ENCODE measurements at regions of chr6 and their contacts with region 1.

Region 1: DNA sequence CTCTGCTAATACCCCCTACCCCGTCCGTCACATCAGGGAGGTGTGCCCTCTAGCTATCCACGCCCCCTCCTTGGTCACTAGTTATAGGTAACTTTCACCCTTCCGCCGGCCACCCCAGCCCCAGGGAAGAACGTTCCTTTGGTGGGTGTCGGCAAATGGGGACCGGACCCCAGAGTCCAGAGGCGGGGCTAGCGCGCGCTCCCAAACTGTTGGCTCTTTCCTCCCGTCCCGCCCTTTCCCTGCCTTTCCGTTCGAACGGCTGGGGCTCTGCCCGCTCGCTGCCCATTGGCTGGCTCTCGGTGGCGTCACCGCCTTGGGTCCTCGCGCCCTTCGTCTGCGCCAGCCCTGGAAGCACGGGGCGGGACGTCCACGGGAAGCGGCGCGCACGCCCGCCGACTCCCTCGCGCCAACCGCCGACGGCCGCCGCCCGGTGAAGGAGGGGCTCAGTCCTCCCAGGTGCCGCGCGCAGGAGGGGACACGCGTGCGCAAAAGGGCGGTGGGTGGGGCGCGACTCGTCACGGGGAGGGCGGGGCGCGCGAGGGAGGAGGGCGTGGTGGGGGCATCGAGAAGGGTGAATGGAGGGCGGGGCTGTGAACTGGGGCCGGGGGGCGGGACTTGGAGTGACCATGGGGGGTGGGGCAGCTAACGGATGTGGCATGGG is 634 bp upstream of the PHF1 start:
- DNase-seq: peak; percentile 94 to 98 (median 95)
- ATAC-seq: peak; percentile 82
- H3K4me3 ChIP-seq: peak overlapping the region; percentile 78
- H3K4me3 Mint-ChIP-seq: peak overlapping the region; percentile 85 to 95 (median 90)
- H3K27ac ChIP-seq: peak overlapping the region; percentile 100
- H3K27ac Mint-ChIP-seq: peak overlapping the region; percentile 65 to 99 (median 97)
- H3K4me1 ChIP-seq: peaks cover 35 to 36% of the 10 kb centered on the region in 2 donors
- H3K4me1 Mint-ChIP-seq: peaks cover 25 to 60% (median 46%) of the 10 kb centered on the region in 7 donors
- H3K27me3 ChIP-seq: no peaks in the 10 kb centered on the region
- H3K27me3 Mint-ChIP-seq: no peaks in the 10 kb centered on the region

Region 2: GRCh38 chr6:32843979-32844838 is 566.0 kb before region 1 on chr6 and contains the start of gene PSMB8:
- CTCF ChIA-PET with region 1: no interaction called
- POLR2A ChIA-PET with region 1: no interaction called
- intact Hi-C with region 1: loop called in 1 of 2 experiments (anchors 2 kb)
- DNase-seq: peak; percentile 92 to 99 (median 97)
- ATAC-seq: peak; percentile 90
- H3K4me3 ChIP-seq: peak within 1 kb of the TSS; percentile 97
- H3K4me3 Mint-ChIP-seq: peak within 1 kb of the TSS; percentile 92 to 99 (median 98)
- H3K27ac ChIP-seq: peak within 1 kb of the TSS; percentile 97
- H3K27ac Mint-ChIP-seq: peak within 1 kb of the TSS; percentile 99 to 100 (median 100)
- H3K4me1 ChIP-seq: peaks cover 71 to 72% of the 10 kb centered on the region in 2 donors
- H3K4me1 Mint-ChIP-seq: peaks cover 66 to 83% (median 79%) of the 10 kb centered on the region in 7 donors
- H3K27me3 ChIP-seq: no peaks in the 10 kb centered on the region
- H3K27me3 Mint-ChIP-seq: no peaks in the 10 kb centered on the region
- total RNA-seq, gene PSMB8: 111 to 419 (median 115) TPM

Region 3: DNA sequence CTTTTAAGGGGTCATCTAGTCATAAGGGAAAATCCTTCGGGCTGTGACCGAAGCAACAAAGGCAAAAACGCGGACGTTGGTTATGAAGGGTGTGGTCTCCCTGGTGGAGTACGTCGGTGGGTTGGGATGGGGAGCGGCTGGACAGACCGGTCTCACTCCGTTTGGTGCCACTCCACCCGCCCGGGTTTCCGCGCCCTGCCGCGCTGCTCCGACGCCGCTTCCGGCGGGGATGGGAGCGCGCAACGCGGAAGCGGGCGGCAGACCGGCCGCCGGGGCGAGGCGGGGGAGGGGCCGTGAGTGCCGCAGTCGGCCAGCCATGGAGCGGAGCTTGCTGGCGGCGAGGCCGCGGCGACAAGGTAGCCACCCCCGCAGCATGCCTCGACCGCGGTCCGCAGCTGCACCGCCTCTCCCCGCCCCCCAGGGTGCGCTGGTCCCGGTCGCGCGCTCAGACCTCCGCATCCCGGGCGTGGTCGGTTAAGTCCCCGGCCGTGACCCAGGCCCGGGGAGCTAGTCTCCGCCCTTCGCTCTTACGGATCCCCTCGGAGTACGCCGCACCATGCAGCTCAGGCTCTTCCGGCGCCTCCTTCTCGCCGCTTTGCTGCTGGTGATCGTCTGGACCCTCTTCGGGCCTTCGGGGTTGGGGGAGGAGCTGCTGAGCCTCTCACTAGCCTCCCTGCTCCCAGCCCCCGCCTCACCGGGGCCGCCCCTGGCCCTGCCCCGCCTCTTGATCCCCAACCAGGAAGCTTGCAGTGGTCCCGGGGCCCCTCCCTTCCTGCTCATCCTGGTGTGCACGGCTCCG is 133.1 kb before region 1 on chr6 and contains the start of gene B3GALT4:
- CTCF ChIA-PET with region 1: no interaction called
- POLR2A ChIA-PET with region 1: interaction called, 8 read pairs
- intact Hi-C with region 1: loop called in 1 of 2 experiments (anchors 1 kb)
- DNase-seq: peak; percentile 55 to 88 (median 63)
- ATAC-seq: peak; percentile 81
- H3K4me3 ChIP-seq: peak within 1 kb of the TSS; percentile 67
- H3K4me3 Mint-ChIP-seq: peak within 1 kb of the TSS; percentile 84 to 99 (median 92)
- H3K27ac ChIP-seq: peak within 1 kb of the TSS; percentile 87
- H3K27ac Mint-ChIP-seq: peak within 1 kb of the TSS; percentile 88 to 98 (median 93)
- H3K4me1 ChIP-seq: peaks cover 47 to 50% of the 10 kb centered on the region in 2 donors
- H3K4me1 Mint-ChIP-seq: peaks cover 38 to 83% (median 65%) of the 10 kb centered on the region in 7 donors
- H3K27me3 ChIP-seq: no peaks in the 10 kb centered on the region
- H3K27me3 Mint-ChIP-seq: no peaks in the 10 kb centered on the region
- total RNA-seq, gene B3GALT4: 12.9 to 48.0 (median 18.2) TPM

Region 4: GRCh38 chr6:33317669-33318425 is 92.3 kb before region 1 on chr6 and contains the start of gene ZBTB22:
- CTCF ChIA-PET with region 1: no interaction called
- POLR2A ChIA-PET with region 1: interaction called, 5 read pairs
- intact Hi-C with region 1: loop called (anchors 1 kb)
- DNase-seq: peak; percentile 87 to 97 (median 96)
- ATAC-seq: peak; percentile 73
- H3K4me3 ChIP-seq: peak within 1 kb of the TSS; percentile 97
- H3K4me3 Mint-ChIP-seq: peak within 1 kb of the TSS; percentile 81 to 100 (median 100)
- H3K27ac ChIP-seq: peak within 1 kb of the TSS; percentile 99
- H3K27ac Mint-ChIP-seq: peak within 1 kb of the TSS; percentile 97 to 99 (median 98)
- H3K4me1 ChIP-seq: peaks cover 59 to 62% of the 10 kb centered on the region in 2 donors
- H3K4me1 Mint-ChIP-seq: peaks cover 53 to 85% (median 75%) of the 10 kb centered on the region in 7 donors
- H3K27me3 ChIP-seq: no peaks in the 10 kb centered on the region
- H3K27me3 Mint-ChIP-seq: peaks cover 0 to 2% (median 0%) of the 10 kb centered on the region in 5 donors
- total RNA-seq, gene ZBTB22: 15.5 to 30.1 (median 20.5) TPM

Region 5: DNA sequence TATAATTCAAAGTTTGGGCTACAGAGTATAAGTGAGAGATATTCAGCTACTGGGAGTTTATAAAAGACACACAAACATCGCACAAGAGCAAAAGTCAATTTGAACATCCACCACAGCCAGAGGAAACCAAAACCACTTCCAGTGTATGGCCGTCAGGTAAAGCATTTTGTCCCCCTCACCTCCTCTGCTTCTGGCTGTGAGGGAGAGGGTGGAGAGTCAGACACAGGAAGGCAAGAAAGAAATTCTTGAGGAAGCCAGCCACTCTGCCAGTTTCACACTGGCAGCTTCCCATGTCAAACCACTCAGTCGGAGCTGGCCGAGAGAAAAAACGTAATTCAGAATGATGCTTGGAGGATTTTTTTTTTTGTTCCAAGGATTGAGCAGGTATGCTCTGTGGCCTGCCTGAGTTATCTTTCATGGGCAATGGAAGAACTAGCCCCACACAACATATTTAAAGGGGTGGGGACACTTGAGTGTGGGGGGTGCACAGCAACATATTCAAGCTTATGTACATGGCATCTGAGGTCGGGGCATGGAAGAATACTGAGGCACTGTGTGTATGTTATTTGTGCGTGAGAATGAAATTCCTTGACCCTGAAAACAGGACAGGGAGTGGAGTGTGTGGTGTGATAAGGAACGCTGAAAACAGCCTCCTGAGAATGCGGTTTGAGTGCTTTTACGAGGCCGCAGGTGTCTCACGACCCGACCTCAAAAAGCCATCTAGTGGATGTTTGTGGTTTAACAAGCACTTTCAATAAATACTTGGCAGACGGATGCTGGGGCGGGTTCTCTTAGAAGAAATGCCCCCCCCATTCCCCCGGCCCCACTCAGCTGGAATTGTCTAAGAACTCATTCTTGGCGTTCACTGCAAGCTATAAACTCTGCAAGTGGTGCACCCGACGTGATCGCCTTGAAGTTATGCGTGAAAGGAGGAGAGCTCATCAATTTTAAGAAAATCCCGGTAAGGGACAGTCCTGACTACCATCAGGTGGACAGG is 65.2 kb before region 1 on chr6:
- CTCF ChIA-PET with region 1: no interaction called
- POLR2A ChIA-PET with region 1: no interaction called
- intact Hi-C with region 1: loop called in 1 of 2 experiments (anchors 1 kb)
- DNase-seq: peak; percentile 28 to 87 (median 82)
- ATAC-seq: peak; percentile 60
- H3K4me3 ChIP-seq: peak overlapping the region; percentile 64
- H3K4me3 Mint-ChIP-seq: peak overlapping the region; percentile 68 to 89 (median 86)
- H3K27ac ChIP-seq: peak overlapping the region; percentile 60
- H3K27ac Mint-ChIP-seq: peak overlapping the region; percentile 88 to 99 (median 96)
- H3K4me1 ChIP-seq: peaks cover 23 to 33% of the 10 kb centered on the region in 2 donors
- H3K4me1 Mint-ChIP-seq: peaks cover 22 to 54% (median 41%) of the 10 kb centered on the region in 7 donors
- H3K27me3 ChIP-seq: no peaks in the 10 kb centered on the region
- H3K27me3 Mint-ChIP-seq: peaks cover 0 to 7% (median 0%) of the 10 kb centered on the region in 5 donors

Region 6: GRCh38 chr6:33430991-33431879 is 21.1 kb after region 1 on chr6:
- CTCF ChIA-PET with region 1: no interaction called
- POLR2A ChIA-PET with region 1: interaction called, 39 read pairs
- intact Hi-C with region 1: loop called in 1 of 2 experiments (anchors 1 kb)
- DNase-seq: peak; percentile 65 to 89 (median 87)
- ATAC-seq: peak; percentile 82
- H3K4me3 ChIP-seq: peak overlapping the region; percentile 52
- H3K4me3 Mint-ChIP-seq: peak overlapping the region; percentile 86 to 98 (median 92)
- H3K27ac ChIP-seq: peak overlapping the region; percentile 88
- H3K27ac Mint-ChIP-seq: peak overlapping the region; percentile 81 to 98 (median 96)
- H3K4me1 ChIP-seq: peaks cover 42 to 51% of the 10 kb centered on the region in 2 donors
- H3K4me1 Mint-ChIP-seq: peaks cover 56 to 69% (median 64%) of the 10 kb centered on the region in 7 donors
- H3K27me3 ChIP-seq: no peaks in the 10 kb centered on the region
- H3K27me3 Mint-ChIP-seq: no peaks in the 10 kb centered on the region

Region 7: DNA sequence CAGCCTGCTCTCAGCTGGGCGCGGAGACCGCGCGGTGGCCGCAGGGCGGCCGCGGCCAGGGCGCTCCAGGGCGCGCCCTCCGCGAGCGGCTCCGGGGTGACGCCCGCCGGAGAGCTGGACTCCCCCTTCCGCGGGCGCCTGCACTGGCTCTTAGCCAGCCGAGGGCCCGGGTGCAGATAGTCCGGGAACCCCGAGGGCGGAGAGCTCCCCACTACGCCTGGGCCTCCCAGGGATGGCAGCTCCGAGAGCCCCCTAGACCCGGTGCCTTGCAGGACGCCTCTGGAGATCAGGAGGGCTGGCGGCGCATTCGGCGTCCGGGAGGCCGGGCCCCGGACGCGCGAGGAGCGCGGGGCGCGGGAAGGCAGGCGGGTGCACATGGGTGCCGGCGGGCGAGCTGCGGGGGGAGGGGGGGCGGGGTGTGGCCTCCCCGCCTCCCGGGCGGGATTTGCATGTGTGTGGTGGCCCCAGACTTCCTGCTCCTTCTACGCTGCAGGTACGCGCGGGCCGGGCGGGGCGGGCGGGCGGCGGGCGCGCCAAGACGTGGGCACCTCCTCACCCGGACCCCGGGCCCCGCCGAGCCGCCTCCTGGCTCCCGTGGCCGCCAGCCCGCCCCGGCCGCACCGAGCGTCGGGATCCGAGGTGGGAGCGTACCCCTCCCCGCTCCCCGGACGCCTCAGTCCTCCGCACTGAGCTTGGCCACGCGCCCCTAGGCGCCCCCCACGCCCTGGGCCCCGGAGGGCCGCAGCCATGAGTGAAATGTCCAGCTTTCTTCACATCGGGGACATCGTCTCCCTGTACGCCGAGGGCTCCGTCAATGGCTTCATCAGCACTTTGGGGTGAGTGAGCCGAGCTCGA is 210.9 kb after region 1 on chr6 and contains the start of gene ITPR3:
- CTCF ChIA-PET with region 1: no interaction called
- POLR2A ChIA-PET with region 1: no interaction called
- intact Hi-C with region 1: loop called in 1 of 2 experiments (anchors 5 kb)
- DNase-seq: peak; percentile 63 to 83 (median 80)
- ATAC-seq: peak; percentile 94
- H3K4me3 ChIP-seq: peak within 1 kb of the TSS; percentile 80
- H3K4me3 Mint-ChIP-seq: peak within 1 kb of the TSS; percentile 91 to 97 (median 96)
- H3K27ac ChIP-seq: peak within 1 kb of the TSS; percentile 97
- H3K27ac Mint-ChIP-seq: peak within 1 kb of the TSS; percentile 82 to 96 (median 94)
- H3K4me1 ChIP-seq: peaks cover 9 to 35% of the 10 kb centered on the region in 2 donors
- H3K4me1 Mint-ChIP-seq: peaks cover 29 to 74% (median 66%) of the 10 kb centered on the region in 7 donors
- H3K27me3 ChIP-seq: no peaks in the 10 kb centered on the region
- H3K27me3 Mint-ChIP-seq: peaks cover 0 to 2% (median 0%) of the 10 kb centered on the region in 5 donors
- total RNA-seq, gene ITPR3: 35.6 to 65.7 (median 47.7) TPM

Measured in naive thymus-derived CD4-positive, alpha-beta T cell (primary cell).